ENCODE measurements at regions of chr12 and their contacts with region 1.

Region 1: DNA sequence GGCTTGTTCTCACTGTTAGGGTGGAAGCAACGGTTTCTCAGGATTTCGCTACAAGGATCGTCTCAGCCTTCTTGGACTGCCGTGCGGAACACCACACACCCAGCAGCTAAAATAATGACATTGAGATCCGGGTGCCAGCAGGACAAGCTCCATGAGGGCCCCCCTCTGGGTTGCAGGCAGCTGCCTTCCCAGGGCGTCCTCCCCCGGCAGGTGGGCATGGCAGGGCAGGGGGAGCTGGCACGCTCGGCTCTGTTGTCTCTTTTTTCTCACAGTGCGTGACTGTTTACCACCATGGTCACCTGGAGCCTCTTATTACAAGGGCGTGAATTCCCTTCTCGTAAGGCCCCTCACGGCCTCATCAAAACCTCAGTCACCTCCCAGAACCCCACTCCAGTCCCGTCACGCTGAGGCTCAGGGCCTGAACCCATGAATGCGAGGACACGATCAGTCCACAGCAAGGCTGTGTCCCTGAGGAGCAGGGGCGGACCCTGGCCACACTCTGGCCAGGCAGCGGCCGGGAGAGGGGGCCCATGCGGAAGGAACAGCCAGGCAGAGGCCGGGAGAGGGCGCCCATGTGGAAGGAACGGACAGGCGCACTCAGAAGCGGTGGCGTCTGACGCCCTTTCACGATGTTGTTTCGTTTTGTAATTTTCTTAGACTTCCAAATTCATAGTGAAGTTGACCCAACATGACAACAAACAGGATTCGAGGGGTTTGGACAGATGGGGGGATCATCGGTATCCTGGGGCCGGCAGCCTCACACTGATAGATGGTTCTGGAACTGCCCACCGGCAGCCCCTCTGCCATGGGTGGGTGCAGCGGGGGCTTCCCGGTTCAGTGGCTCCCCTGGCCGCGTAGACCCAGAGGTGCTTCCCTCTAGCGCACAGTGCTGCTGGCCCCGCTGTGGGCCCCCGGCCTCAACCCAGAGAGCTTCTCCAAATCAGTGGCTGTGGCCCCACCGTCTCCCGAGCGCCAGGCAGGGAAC is 10.0 kb downstream of the LRCOL1 start:
- DNase-seq: peak; percentile 71
- H3K4me3 ChIP-seq: peak overlapping the region; percentile 41
- H3K27ac ChIP-seq: no peak overlapping the region
- H3K4me1 ChIP-seq: peaks cover 12% of the 10 kb centered on the region
- H3K27me3 ChIP-seq: peaks cover 11% of the 10 kb centered on the region
- CTCF ChIP-seq: peak; percentile 83

Region 2: DNA sequence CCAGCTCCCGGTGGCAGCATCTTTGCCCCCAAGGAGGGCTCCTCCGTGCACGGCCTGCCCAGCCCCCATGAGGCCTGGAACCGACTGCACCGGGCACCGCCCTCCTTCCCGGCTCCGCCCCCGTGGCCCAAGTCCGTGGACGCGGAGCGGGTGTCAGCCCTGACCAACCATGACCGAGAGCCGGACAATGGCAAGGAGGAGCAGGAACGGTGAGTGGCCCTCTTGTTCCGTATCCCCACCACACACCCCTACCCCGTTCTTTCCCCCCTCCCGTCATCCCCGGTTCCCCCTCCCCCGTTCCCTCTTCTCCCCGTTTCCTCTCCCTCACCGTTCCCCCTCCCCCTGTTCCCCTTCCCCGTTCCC is 18.3 kb before region 1 on chr12:
- CTCF ChIA-PET with region 1: no interaction called
- POLR2A ChIA-PET with region 1: no interaction called
- intact Hi-C with region 1: no loop called
- DNase-seq: no peak
- H3K4me3 ChIP-seq: no peak overlapping the region
- H3K27ac ChIP-seq: no peak overlapping the region
- H3K4me1 ChIP-seq: no peaks in the 10 kb centered on the region
- H3K27me3 ChIP-seq: no peaks in the 10 kb centered on the region
- CTCF ChIP-seq: no peak

Region 3: GRCh38 chr12:132614861-132615578 is 14.7 kb after region 1 on chr12:
- CTCF ChIA-PET with region 1: interaction called, 13 read pairs
- POLR2A ChIA-PET with region 1: no interaction called
- intact Hi-C with region 1: no loop called
- DNase-seq: peak; percentile 92
- H3K4me3 ChIP-seq: no peak overlapping the region
- H3K27ac ChIP-seq: no peak overlapping the region
- H3K4me1 ChIP-seq: peaks cover 5% of the 10 kb centered on the region
- H3K27me3 ChIP-seq: peaks cover 37% of the 10 kb centered on the region
- CTCF ChIP-seq: peak; percentile 95

Region 4: DNA sequence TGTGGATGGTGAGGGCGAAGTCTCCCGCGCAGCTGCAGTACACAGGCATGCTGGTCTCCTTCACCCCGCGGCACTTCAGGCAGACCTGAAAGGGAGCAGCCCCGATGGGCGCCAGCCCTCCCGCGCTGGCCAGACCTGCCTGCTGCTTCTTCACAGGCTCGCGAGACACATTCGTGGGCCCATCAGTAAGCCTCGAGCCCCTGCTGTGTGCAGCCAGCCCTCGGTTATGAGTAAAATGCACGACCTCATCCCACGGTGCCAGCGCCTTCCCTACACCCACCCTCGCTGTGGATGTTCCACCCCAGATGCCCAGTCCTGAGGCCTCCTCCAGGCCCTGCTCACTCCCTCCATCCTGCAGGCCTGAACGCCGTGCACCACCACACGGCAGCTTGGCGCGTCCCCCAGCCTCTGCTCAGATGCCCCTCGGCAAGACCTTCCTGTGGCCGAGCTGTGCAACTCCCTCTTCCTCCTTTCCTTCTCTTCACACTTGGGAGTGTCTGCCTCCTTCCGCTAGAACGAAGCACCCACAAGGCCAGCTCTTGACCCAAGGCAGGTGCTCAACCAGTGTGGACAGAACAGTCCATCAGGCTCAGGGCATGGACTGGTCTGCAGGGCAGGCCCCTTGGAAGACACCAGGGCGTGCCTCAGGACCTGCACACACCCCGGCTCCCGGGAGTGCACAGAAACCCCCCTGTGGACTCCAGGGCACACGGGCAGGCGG is 24.7 kb after region 1 on chr12:
- CTCF ChIA-PET with region 1: no interaction called
- POLR2A ChIA-PET with region 1: no interaction called
- intact Hi-C with region 1: no loop called
- DNase-seq: no peak
- H3K4me3 ChIP-seq: no peak overlapping the region
- H3K27ac ChIP-seq: no peak overlapping the region
- H3K4me1 ChIP-seq: peaks cover 22% of the 10 kb centered on the region
- H3K27me3 ChIP-seq: no peaks in the 10 kb centered on the region
- CTCF ChIP-seq: no peak